Posterior vena cava (tissue), 2 donors: ENCODE measurements at regions of chr19 and their contacts with region 1.

Region 1: DNA sequence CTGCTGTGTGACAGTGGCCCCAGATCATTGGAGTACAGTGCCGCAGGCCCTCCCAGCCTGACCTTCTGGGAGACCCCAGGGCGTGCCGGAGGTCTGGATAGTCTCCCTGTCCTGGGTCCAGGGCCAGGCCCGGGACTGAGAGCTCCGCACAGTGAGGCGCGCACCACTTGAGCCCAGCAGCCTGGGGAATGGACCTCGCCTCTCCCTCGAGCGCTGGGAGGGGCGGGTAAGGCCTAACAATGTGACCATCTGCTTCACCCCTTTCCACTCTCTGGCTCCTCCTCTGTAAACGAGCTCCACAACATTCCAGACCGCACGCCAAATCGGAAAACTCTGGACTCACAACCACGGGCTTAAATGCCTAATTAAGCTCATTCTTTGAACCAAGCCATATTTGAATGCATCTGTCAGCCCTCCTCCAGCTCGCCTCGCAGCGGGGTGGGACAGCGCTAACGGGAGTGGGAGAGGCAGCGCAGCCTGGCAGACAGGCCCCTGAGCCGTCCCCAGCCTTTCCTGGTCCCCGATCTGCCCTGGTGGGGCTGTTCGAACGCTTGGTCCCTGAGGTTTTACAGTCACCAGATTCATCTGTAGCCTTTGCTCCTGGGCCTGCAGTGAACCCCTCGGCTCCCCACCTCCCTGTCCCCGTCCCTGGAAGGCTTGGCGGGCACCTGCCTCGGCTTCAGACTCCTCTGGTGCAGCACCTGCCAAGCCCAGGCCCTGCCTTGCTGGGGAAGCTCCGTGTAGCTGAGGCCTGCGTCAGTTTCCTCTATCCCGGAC is 120.7 kb upstream of the VSTM2B start:
- DNase-seq: no peak

Region 2: GRCh38 chr19:29105629-29106292 is 299.4 kb before region 1 on chr19:
- intact Hi-C with region 1: loop called in 1 of 2 experiments (anchors 5 kb)
- DNase-seq: peak; percentile 53